ENCODE measurements at regions of chr10 and their contacts with region 1.

Region 1: DNA sequence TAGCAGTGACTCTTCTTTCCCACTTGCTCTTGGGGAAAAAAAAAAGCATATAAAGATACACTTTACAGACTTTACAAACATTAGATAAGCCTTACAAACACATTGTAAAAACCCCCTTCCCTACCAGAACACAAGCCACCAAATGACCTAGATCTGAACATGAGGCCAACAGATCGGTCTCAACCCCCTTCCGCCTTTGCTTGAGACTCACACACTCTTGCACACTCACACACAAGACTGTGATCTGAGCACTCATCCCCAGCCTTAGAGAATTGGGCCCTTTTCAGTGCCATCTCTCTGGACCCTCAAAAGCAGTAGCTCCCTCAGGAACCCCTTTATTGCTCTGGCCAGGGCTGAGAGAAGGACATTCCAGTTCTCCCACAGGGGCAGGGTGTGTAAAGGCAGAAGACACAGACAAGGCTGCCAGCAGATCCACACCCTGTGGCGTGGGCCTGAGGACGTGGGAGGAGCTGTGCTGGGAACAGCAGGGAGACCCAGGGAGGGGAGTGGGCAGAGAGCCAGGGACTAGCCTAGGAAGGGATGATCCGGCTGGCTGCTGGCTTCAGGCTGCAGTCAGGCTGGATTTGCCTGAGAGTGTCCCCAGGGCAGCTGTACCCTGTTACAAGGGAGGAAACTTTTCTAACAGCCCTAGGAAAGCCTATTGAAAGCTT is 206.7 kb downstream of the KIAA1217 start:
- DNase-seq: peak; percentile 51 to 62
- H3K4me3 ChIP-seq: no peak overlapping the region
- H3K4me3 Mint-ChIP-seq: peak overlapping the region; percentile 16
- H3K27ac Mint-ChIP-seq: peak overlapping the region; percentile 63
- H3K4me1 ChIP-seq: peaks cover 44% of the 10 kb centered on the region
- H3K4me1 Mint-ChIP-seq: peaks cover 29% of the 10 kb centered on the region
- H3K27me3 ChIP-seq: no peaks in the 10 kb centered on the region
- H3K27me3 Mint-ChIP-seq: no peaks in the 10 kb centered on the region
- CTCF ChIP-seq: no peak

Region 2: DNA sequence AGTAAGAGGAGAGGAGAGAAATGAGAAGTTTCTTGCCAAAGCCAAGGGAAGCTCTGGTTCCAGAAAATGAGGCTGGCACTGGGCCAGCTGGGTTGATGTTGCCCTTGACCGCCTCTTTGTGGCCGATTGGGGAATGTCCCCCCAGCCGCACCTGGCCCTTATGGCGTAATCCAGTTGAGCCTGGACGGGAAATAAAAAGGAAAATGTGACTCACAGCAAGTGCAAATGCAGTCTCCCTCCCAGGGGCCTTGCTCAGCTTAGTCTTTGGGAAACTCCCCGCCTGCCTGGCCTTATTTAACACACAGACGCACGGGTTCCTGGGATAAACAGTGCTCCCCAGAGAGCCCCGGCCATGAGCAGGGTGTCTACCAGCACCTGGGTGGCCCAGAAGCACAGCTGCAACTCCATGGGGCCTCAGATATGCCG is 31.9 kb before region 1 on chr10:
- CTCF ChIA-PET with region 1: interaction called, 3 read pairs
- POLR2A ChIA-PET with region 1: no interaction called
- intact Hi-C with region 1: loop called (anchors 1 kb)
- DNase-seq: peak; percentile 87 to 90
- H3K4me3 ChIP-seq: no peak overlapping the region
- H3K4me3 Mint-ChIP-seq: peak overlapping the region; percentile 58
- H3K27ac Mint-ChIP-seq: peak overlapping the region; percentile 92
- H3K4me1 ChIP-seq: peaks cover 31% of the 10 kb centered on the region
- H3K4me1 Mint-ChIP-seq: peaks cover 23% of the 10 kb centered on the region
- H3K27me3 ChIP-seq: no peaks in the 10 kb centered on the region
- H3K27me3 Mint-ChIP-seq: no peaks in the 10 kb centered on the region
- CTCF ChIP-seq: peak; percentile 60 to 67

Region 3: GRCh38 chr10:24597426-24597825 is 181.8 kb after region 1 on chr10:
- CTCF ChIA-PET with region 1: no interaction called
- POLR2A ChIA-PET with region 1: no interaction called
- intact Hi-C with region 1: no loop called
- DNase-seq: no peak
- H3K4me3 ChIP-seq: no peak overlapping the region
- H3K4me3 Mint-ChIP-seq: no peak overlapping the region
- H3K27ac Mint-ChIP-seq: no peak overlapping the region
- H3K4me1 ChIP-seq: no peaks in the 10 kb centered on the region
- H3K4me1 Mint-ChIP-seq: no peaks in the 10 kb centered on the region
- H3K27me3 ChIP-seq: no peaks in the 10 kb centered on the region
- H3K27me3 Mint-ChIP-seq: no peaks in the 10 kb centered on the region
- CTCF ChIP-seq: no peak

Measured in Caco-2 (cell line).